Mammary epithelial cell (primary cell): ENCODE measurements at regions of chr4 and their contacts with region 1.

Region 1: DNA sequence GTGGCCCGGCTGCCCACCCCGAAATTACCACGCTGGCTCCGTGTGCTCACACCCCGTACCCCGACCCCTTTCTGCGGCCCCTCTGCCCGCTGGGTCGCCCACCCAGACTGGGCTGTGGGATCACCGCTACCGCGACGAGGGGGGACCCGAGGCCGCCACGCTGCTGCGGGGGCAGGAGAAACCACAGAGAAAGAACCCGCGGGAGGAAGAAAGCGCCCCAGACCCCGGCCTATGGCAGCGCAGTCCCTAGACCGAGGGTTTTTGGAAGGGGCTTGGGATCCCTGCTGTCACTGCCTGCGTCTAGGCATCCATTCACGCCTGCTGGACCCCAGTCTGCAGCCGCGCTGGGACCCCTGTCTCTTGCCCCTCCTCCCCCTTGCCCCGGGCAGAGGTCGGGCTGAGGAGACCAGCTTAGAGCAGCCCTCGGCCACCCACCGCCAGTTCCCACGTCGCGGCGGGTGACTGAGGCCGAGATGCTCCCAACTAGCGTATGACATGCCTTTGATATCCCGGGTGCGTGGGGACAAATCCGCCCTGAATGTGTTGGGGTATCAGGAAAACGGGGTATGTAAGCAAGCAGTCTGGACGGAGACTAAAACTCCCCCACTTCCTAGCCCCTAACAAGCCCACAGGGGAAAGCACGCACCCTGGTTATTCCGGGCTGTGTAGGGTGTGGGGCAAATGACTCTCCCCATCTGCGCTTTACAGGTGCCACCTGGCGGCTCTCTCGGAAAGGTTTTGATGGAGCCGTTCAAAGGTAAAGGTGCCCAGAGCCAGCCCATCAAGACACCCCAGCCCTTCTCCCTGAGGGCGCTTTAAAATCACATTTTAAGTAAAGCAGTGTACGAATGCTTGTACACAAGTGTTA is 862 bp upstream of the INPP4B start:
- DNase-seq: peak; percentile 68
- H3K4me3 ChIP-seq: peak overlapping the region; percentile 59 to 88 (median 73)
- H3K27ac ChIP-seq: no peak overlapping the region
- H3K4me1 ChIP-seq: peaks cover 4% of the 10 kb centered on the region
- H3K27me3 ChIP-seq: peaks cover 3% of the 10 kb centered on the region
- CTCF ChIP-seq: peak; percentile 67 to 81

Region 2: DNA sequence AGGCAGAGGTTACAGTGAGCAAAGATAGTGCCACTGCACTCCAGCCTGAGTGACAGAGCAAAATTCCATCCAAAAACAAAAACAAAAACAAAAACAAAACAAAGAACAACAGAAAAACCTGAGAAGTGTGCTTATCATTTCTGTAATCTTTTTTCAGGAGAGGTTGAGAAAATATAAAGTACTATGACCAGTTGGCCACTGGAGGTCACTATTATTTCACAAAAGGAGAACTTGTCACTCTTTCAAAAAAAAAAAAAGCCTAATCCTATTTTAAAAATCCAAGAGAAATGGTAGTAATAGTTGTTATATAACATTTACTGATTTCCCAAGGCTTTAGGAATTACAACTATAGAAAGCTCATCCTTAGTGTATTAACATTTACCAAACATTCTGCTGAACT is 1688.7 kb before region 1 on chr4:
- CTCF ChIA-PET with region 1: no interaction called
- dilution Hi-C with region 1: no loop called
- in situ Hi-C with region 1: no loop called
- intact Hi-C with region 1: loop called (anchors 2 kb)
- DNase-seq: no peak
- H3K4me3 ChIP-seq: no peak overlapping the region
- H3K27ac ChIP-seq: no peak overlapping the region
- H3K4me1 ChIP-seq: no peaks in the 10 kb centered on the region
- H3K27me3 ChIP-seq: no peaks in the 10 kb centered on the region
- CTCF ChIP-seq: peak; percentile 23 to 47

Region 3: GRCh38 chr4:141346144-141346543 is 1500.8 kb before region 1 on chr4:
- CTCF ChIA-PET with region 1: no interaction called
- dilution Hi-C with region 1: no loop called
- in situ Hi-C with region 1: no loop called
- intact Hi-C with region 1: loop called (anchors 10 kb)
- DNase-seq: peak; percentile 39
- H3K4me3 ChIP-seq: no peak overlapping the region
- H3K27ac ChIP-seq: no peak overlapping the region
- H3K4me1 ChIP-seq: peaks cover 13% of the 10 kb centered on the region
- H3K27me3 ChIP-seq: no peaks in the 10 kb centered on the region
- CTCF ChIP-seq: peak; percentile 58 to 64

Region 4: DNA sequence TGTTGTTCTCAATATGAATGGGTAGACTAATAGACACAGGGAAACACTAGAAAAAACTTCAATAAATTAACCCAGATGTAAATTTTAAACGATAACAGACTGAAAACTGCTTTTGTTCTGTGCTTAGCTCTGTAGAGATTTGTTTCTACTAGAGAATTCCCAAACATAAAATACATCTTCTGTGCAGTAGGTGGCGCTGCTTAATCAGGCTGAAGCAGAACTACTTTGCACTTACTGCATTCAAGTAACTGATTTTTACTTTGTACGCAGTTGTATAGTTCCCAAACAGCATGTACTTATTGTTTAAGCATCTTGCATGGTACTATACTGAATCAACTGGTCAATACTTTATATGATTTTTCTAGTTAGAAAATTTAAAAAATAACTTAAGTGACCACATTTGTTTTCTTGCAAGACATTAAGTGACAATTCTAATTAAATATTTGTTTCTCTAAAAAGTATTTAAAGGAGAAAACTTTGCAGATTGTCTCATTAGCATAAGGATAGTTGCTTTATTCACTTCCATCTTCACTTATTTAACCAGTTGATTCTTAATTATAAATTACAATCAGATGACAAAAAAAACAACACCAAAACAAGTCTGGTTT is 720.0 kb before region 1 on chr4:
- CTCF ChIA-PET with region 1: no interaction called
- dilution Hi-C with region 1: no loop called
- in situ Hi-C with region 1: loop called (anchors 25 kb)
- intact Hi-C with region 1: loop called (anchors 1 kb)
- DNase-seq: peak; percentile 41
- H3K4me3 ChIP-seq: no peak overlapping the region
- H3K27ac ChIP-seq: no peak overlapping the region
- H3K4me1 ChIP-seq: peaks cover 6% of the 10 kb centered on the region
- H3K27me3 ChIP-seq: no peaks in the 10 kb centered on the region
- CTCF ChIP-seq: peak; percentile 80 to 82

Region 5: DNA sequence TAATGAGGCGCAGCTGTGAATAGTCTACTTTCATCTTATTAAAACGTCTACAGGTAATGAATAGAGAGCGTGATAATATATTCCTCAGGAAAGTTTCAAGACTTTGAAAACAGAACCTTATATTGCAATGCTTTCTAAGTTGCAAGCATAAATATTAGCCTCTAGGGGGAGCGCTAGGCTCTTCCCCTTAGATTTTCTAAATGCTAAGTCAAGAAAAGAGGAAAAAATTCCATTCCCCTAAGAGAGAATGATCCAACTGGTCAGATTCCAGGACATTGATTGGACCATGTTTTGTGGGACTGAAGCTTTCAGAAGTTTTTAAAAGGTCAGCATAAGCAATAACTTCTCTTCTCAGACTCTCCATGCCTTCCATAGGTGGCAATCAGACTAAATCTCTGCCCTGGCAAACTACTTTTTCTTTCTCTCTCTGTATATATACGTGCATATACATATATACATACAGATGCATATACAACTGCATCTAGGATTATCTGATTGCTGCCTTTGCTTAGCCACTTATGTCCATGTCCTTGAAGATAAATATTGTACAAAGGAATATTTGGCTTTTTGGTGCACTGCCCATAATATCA is 493.7 kb before region 1 on chr4:
- CTCF ChIA-PET with region 1: no interaction called
- dilution Hi-C with region 1: no loop called
- in situ Hi-C with region 1: loop called (anchors 10 kb)
- intact Hi-C with region 1: no loop called
- DNase-seq: peak; percentile 59
- H3K4me3 ChIP-seq: peak overlapping the region in 1 of 3 experiments; percentile 24
- H3K27ac ChIP-seq: peak overlapping the region; percentile 32
- H3K4me1 ChIP-seq: peaks cover 33% of the 10 kb centered on the region
- H3K27me3 ChIP-seq: no peaks in the 10 kb centered on the region
- CTCF ChIP-seq: peak; percentile 83 to 91

Region 6: DNA sequence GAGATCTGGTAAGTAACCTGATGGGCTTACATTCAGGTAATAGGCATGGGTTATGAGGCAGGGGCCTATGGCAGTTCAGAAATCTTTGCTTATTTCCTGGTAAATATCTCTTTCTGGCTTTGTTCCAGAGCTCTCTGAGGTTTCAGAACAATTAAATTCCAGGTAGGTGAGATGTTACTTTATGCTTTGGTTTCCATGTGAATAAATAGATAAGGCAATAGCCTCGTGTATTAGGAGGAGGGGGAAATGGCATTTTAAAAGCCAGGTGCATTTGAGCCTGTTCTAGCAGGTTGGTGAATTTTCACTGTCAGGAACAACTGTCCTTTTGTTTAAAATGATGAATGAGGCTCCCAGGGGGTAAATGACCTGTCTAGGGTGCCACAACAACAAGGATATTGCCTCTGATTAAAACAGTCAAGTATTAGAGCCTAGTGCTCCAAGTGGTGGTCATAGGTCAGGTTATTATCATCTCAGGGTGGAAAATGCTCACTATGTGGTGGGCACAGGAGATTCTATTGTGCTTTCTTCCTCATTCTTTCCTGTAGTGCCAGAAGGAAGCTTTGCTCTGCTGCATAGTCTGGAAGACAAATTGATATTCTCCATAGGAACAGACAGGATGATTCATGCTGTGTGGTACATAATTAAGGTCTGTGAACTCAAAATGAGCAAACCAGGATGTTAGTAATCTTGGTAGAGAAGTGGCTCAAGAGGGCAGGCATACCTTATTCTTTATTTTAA is 297.1 kb before region 1 on chr4:
- CTCF ChIA-PET with region 1: no interaction called
- dilution Hi-C with region 1: no loop called
- in situ Hi-C with region 1: no loop called
- intact Hi-C with region 1: loop called (anchors 1 kb)
- DNase-seq: peak; percentile 97
- H3K4me3 ChIP-seq: no peak overlapping the region
- H3K27ac ChIP-seq: peak overlapping the region; percentile 100
- H3K4me1 ChIP-seq: peaks cover 43% of the 10 kb centered on the region
- H3K27me3 ChIP-seq: no peaks in the 10 kb centered on the region
- CTCF ChIP-seq: peak in 1 of 2 donors; percentile 11

Region 7: GRCh38 chr4:143482840-143483239 is 635.9 kb after region 1 on chr4:
- CTCF ChIA-PET with region 1: no interaction called
- dilution Hi-C with region 1: no loop called
- in situ Hi-C with region 1: no loop called
- intact Hi-C with region 1: loop called (anchors 5 kb)
- DNase-seq: peak; percentile 18
- H3K4me3 ChIP-seq: no peak overlapping the region
- H3K27ac ChIP-seq: no peak overlapping the region
- H3K4me1 ChIP-seq: no peaks in the 10 kb centered on the region
- H3K27me3 ChIP-seq: no peaks in the 10 kb centered on the region
- CTCF ChIP-seq: peak; percentile 40 to 57